Activated T-helper 1 cell treated with anti-CD3 and anti-CD28 coated beads, Interleukin-12 subunit alpha, Interleukin-12 subunit beta, Interleukin-2, Interleukin-4 antibody, amounts not matched to agents 30 ng/mL and 10 ng/mL and 1 ng/mL, durations not matched to agents 14 hours and 24 hours and 36 hours (primary cell): ENCODE measurements at regions of chr22 and their contacts with region 1.

Region 1: DNA sequence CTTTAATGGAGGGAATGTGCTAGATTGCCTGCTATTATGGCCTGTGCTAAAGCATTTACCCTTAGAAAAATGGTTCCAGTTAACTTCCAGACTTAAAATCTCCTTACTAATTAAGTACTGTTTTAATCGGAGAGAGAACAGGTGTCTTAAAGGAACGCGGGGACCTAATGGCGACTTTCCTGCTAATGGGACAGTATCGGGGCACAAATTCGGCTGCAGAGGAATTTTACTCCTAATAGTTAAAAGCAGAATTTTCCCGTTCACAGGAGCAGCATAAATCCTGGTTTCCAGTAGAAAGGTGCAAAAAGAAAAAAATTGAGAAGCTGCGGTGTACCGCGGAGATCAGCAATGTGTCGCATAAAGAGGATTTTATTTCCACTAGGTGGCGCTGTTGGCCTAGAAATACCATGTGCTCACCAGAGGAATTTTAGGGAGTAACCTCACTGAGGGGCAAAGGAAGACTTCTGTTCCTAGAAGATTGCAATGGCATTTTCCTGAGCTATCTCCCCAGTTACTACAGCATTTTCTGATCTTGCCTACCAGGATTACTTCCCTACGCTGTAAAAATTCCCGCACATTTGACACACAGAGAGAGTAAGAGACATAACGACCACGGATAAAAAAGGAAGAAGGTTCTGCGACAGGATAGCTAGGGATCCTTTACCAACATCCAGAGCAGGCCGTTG is 44.5 kb downstream of the ZNF280B start:
- DNase-seq: peak; percentile 23
- H3K4me3 Mint-ChIP-seq: no peak overlapping the region
- H3K27ac Mint-ChIP-seq: no peak overlapping the region
- H3K4me1 Mint-ChIP-seq: no peaks in the 10 kb centered on the region
- H3K27me3 Mint-ChIP-seq: peaks cover 20% of the 10 kb centered on the region

Region 2: GRCh38 chr22:21849489-21849888 is 614.5 kb before region 1 on chr22:
- intact Hi-C with region 1: no loop called
- DNase-seq: no peak
- H3K4me3 Mint-ChIP-seq: no peak overlapping the region
- H3K27ac Mint-ChIP-seq: no peak overlapping the region
- H3K4me1 Mint-ChIP-seq: peaks cover 4% of the 10 kb centered on the region
- H3K27me3 Mint-ChIP-seq: no peaks in the 10 kb centered on the region

Region 3: DNA sequence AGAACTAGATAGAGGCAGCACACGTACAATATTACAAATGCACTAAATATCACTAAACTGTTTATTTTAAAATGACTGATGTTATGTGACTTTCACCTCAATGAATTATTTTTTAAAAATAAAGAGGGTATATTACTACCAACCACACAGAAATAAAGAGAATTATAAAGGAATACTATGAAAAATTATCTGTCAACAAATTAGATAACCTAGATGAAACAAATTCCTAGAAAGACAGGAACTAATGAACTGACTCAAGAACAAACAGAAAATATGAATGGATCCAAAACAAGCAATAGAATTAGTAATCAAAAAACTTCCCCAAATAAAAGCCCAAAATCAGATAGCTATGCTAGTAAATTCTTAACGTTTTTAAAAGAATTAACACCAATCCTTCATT is 34.3 kb after region 1 on chr22:
- intact Hi-C with region 1: no loop called
- DNase-seq: no peak
- H3K4me3 Mint-ChIP-seq: no peak overlapping the region
- H3K27ac Mint-ChIP-seq: no peak overlapping the region
- H3K4me1 Mint-ChIP-seq: no peaks in the 10 kb centered on the region
- H3K27me3 Mint-ChIP-seq: no peaks in the 10 kb centered on the region

Region 4: GRCh38 chr22:22520020-22520656 is 56.1 kb after region 1 on chr22 and contains the start of gene ZNF280A:
- intact Hi-C with region 1: no loop called
- DNase-seq: no peak
- H3K4me3 Mint-ChIP-seq: no peak within 1 kb of the TSS
- H3K27ac Mint-ChIP-seq: no peak within 1 kb of the TSS
- H3K4me1 Mint-ChIP-seq: no peaks in the 10 kb centered on the region
- H3K27me3 Mint-ChIP-seq: peaks cover 14% of the 10 kb centered on the region
- total RNA-seq, gene ZNF280A: not detected in 2 replicates

Region 5: GRCh38 chr22:22587577-22588188 is 123.7 kb after region 1 on chr22:
- intact Hi-C with region 1: loop called (anchors 2 kb)
- DNase-seq: no peak
- H3K4me3 Mint-ChIP-seq: no peak overlapping the region
- H3K27ac Mint-ChIP-seq: no peak overlapping the region
- H3K4me1 Mint-ChIP-seq: no peaks in the 10 kb centered on the region
- H3K27me3 Mint-ChIP-seq: peaks cover 3% of the 10 kb centered on the region